ENCODE measurements at regions of chr2 and their contacts with region 1.

Region 1: DNA sequence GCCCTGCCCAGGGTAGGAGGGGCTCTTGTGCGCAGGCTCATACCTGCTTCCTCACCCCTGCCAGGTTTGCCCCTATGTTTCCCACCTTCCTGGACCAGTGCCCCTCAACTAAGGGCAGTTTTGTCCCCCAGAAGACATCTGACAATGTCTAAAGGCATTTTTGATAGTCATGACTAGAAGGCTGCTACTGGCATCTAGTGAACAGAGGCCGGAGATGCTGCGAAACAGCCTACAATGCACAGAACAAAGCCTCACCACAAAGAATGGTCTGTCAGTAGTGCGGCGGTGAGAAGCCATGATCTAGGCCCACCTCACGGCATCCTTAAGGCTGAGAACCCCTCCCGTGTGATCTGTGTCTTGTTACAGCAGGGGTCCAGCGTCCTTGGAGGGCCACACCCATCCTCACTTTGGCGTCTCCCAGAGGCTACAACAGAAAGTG is 96.0 kb downstream of the TMEM17 start:
- DNase-seq: peak in 1 of 2 experiments; percentile 28
- H3K4me3 ChIP-seq: no peak overlapping the region
- H3K4me3 Mint-ChIP-seq: no peak overlapping the region
- H3K27ac Mint-ChIP-seq: peak overlapping the region; percentile 84
- H3K4me1 ChIP-seq: peaks cover 50% of the 10 kb centered on the region
- H3K4me1 Mint-ChIP-seq: peaks cover 58% of the 10 kb centered on the region
- H3K27me3 ChIP-seq: no peaks in the 10 kb centered on the region
- H3K27me3 Mint-ChIP-seq: no peaks in the 10 kb centered on the region
- CTCF ChIP-seq: no peak

Region 2: GRCh38 chr2:60984720-60985119 is 1425.3 kb before region 1 on chr2:
- CTCF ChIA-PET with region 1: no interaction called
- POLR2A ChIA-PET with region 1: no interaction called
- intact Hi-C with region 1: no loop called
- DNase-seq: no peak
- H3K4me3 ChIP-seq: no peak overlapping the region
- H3K4me3 Mint-ChIP-seq: no peak overlapping the region
- H3K27ac Mint-ChIP-seq: no peak overlapping the region
- H3K4me1 ChIP-seq: no peaks in the 10 kb centered on the region
- H3K4me1 Mint-ChIP-seq: no peaks in the 10 kb centered on the region
- H3K27me3 ChIP-seq: no peaks in the 10 kb centered on the region
- H3K27me3 Mint-ChIP-seq: no peaks in the 10 kb centered on the region
- CTCF ChIP-seq: no peak

Region 3: DNA sequence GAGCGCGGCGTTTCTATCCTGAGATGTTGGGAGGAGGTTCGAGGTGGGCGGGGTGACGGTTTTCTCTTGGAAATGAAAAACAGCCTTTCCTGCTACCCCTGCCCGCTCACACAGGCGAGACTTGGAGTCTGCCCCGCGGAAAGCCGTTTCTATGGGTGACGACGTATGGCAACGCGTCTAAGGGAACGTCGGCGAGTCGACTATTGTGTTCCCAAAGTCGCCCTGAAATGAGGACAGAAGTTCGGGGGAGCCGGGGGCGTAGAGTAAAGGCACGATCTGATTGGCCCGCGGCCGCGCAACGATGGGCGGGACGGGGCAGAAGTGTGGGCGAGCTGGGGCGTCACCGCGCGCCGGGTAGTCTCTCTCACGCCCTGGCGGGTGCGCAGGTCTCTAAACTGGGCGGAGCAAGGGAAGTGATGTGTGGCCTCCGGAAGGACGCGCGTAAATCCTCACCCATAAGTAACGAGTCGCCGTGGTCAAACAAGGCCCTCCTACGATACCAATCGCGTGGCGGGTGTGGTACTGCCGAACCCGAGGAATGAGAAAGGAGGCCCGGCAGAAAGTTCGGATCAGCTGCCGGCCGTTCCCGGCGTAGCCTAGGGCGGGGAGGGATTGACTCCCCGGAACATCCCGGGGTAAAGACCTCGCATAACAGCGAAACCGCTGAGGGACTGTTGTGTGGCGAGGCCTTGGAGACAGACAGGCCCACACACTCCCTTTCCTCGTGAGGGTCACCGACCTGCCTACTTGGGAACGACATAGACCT is 645.8 kb before region 1 on chr2:
- CTCF ChIA-PET with region 1: no interaction called
- POLR2A ChIA-PET with region 1: no interaction called
- intact Hi-C with region 1: loop called (anchors 2 kb)
- DNase-seq: peak; percentile 98 to 99
- H3K4me3 ChIP-seq: peak overlapping the region; percentile 56
- H3K4me3 Mint-ChIP-seq: peak overlapping the region; percentile 72
- H3K27ac Mint-ChIP-seq: peak overlapping the region; percentile 97
- H3K4me1 ChIP-seq: no peaks in the 10 kb centered on the region
- H3K4me1 Mint-ChIP-seq: no peaks in the 10 kb centered on the region
- H3K27me3 ChIP-seq: no peaks in the 10 kb centered on the region
- H3K27me3 Mint-ChIP-seq: no peaks in the 10 kb centered on the region
- CTCF ChIP-seq: no peak

Region 4: GRCh38 chr2:61993444-61994024 is 416.5 kb before region 1 on chr2:
- CTCF ChIA-PET with region 1: interaction called, 30 read pairs
- POLR2A ChIA-PET with region 1: no interaction called
- intact Hi-C with region 1: loop called (anchors 1 kb)
- DNase-seq: peak in 1 of 2 experiments; percentile 49
- H3K4me3 ChIP-seq: no peak overlapping the region
- H3K4me3 Mint-ChIP-seq: no peak overlapping the region
- H3K27ac Mint-ChIP-seq: peak overlapping the region; percentile 31
- H3K4me1 ChIP-seq: peaks cover 6% of the 10 kb centered on the region
- H3K4me1 Mint-ChIP-seq: peaks cover 45% of the 10 kb centered on the region
- H3K27me3 ChIP-seq: no peaks in the 10 kb centered on the region
- H3K27me3 Mint-ChIP-seq: no peaks in the 10 kb centered on the region
- CTCF ChIP-seq: peak; percentile 75 to 77

Region 5: DNA sequence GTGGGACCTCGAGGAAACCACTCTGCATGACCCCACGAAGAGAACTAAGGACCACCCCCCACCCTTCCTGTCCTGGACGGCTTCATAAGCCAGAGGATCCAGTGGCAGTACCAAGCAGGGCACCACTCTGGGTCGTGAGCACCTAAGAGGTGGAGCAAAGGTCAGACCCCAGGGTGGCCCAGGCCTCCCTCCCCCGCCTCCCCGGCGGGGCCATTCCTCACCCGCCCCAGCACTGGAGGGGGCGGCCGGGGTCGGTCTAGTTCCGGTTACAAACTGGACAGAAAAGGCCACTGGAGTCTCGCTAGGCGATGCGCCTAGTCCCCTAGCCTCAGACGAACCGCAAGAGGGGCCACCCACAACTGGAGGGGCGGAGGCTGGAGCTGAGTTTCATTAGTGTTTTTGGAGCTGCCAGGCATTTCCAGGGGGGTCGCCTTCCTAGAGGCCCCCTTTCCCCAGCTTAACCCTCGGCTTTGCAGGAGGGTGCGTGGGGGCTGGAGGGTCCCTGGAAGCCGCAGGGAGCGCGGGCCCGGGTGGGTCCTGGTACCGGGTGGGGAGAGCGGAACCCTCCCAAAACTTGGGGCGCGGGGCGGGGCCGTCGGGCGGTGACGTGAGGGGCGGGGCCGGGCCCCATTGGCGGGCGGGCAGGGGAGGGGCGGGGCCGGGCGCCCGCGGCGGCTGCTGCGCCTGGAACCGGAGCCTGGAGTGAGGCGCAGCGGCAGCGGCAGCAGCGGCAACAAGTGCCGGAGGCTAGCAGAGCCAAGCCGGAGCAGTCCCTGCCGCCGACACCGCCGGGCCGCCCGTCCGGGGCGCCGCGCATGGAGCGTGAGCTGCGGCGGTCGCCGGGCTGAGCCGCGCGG is 214.4 kb before region 1 on chr2 and contains the start of gene B3GNT2:
- CTCF ChIA-PET with region 1: interaction called, 3 read pairs
- POLR2A ChIA-PET with region 1: interaction called, 5 read pairs
- intact Hi-C with region 1: loop called (anchors 2 kb)
- DNase-seq: peak; percentile 79 to 85
- H3K4me3 ChIP-seq: peak within 1 kb of the TSS; percentile 95
- H3K4me3 Mint-ChIP-seq: peak within 1 kb of the TSS; percentile 79
- H3K27ac Mint-ChIP-seq: peak within 1 kb of the TSS; percentile 36
- H3K4me1 ChIP-seq: peaks cover 23% of the 10 kb centered on the region
- H3K4me1 Mint-ChIP-seq: peaks cover 10% of the 10 kb centered on the region
- H3K27me3 ChIP-seq: no peaks in the 10 kb centered on the region
- H3K27me3 Mint-ChIP-seq: no peaks in the 10 kb centered on the region
- CTCF ChIP-seq: no peak
- total RNA-seq, gene B3GNT2: 47.4 and 50.5 TPM in 2 replicates

Region 6: DNA sequence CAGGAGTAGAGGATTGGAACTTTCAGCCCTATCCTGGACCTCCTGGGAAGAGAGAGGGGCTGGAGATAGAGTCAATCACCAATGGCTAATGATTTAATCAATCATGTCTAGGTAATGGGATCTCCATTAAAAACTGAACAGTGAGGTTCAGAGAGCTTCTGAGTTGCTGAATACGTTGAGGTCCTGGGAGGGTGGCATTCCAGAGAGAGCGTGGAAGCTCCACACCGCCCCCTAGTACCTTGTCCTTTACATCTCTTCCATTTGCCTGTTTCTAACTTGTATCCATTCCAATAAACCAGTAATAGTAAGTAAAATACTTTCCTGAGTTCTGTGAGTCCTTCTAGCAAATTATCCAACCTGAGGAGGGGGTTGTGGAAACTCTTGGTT is 112.4 kb before region 1 on chr2:
- CTCF ChIA-PET with region 1: interaction called, 5 read pairs
- POLR2A ChIA-PET with region 1: no interaction called
- intact Hi-C with region 1: loop called (anchors 2 kb)
- DNase-seq: peak in 1 of 2 experiments; percentile 34
- H3K4me3 ChIP-seq: no peak overlapping the region
- H3K4me3 Mint-ChIP-seq: no peak overlapping the region
- H3K27ac Mint-ChIP-seq: peak overlapping the region; percentile 47
- H3K4me1 ChIP-seq: peaks cover 34% of the 10 kb centered on the region
- H3K4me1 Mint-ChIP-seq: peaks cover 29% of the 10 kb centered on the region
- H3K27me3 ChIP-seq: no peaks in the 10 kb centered on the region
- H3K27me3 Mint-ChIP-seq: no peaks in the 10 kb centered on the region
- CTCF ChIP-seq: peak; percentile 18 to 28

Region 7: GRCh38 chr2:62362561-62362960 is 47.5 kb before region 1 on chr2:
- CTCF ChIA-PET with region 1: interaction called, 11 read pairs
- POLR2A ChIA-PET with region 1: no interaction called
- intact Hi-C with region 1: loop called (anchors 1 kb)
- DNase-seq: peak; percentile 73 to 85
- H3K4me3 ChIP-seq: no peak overlapping the region
- H3K4me3 Mint-ChIP-seq: no peak overlapping the region
- H3K27ac Mint-ChIP-seq: peak overlapping the region; percentile 54
- H3K4me1 ChIP-seq: peaks cover 19% of the 10 kb centered on the region
- H3K4me1 Mint-ChIP-seq: peaks cover 11% of the 10 kb centered on the region
- H3K27me3 ChIP-seq: no peaks in the 10 kb centered on the region
- H3K27me3 Mint-ChIP-seq: no peaks in the 10 kb centered on the region
- CTCF ChIP-seq: no peak

Region 8: DNA sequence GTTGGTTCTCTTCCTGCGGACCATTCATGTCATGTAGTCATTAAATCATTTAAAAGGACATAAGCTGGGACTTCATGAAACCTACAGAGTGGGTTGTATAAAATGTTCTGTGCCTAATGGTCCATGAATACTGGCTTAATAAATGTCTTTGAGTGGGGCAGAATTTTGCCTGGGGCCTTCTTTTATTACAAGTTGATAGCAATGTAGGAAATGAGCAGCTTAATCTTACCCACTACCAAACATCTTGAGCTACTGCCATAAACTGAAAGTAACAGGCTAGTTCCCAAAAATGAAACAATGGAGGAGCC is 35.0 kb before region 1 on chr2:
- CTCF ChIA-PET with region 1: no interaction called
- POLR2A ChIA-PET with region 1: no interaction called
- intact Hi-C with region 1: no loop called
- DNase-seq: no peak
- H3K4me3 ChIP-seq: no peak overlapping the region
- H3K4me3 Mint-ChIP-seq: no peak overlapping the region
- H3K27ac Mint-ChIP-seq: no peak overlapping the region
- H3K4me1 ChIP-seq: no peaks in the 10 kb centered on the region; the same call in 1 of the 2 replicates
- H3K4me1 Mint-ChIP-seq: peaks cover 2% of the 10 kb centered on the region
- H3K27me3 ChIP-seq: no peaks in the 10 kb centered on the region
- H3K27me3 Mint-ChIP-seq: no peaks in the 10 kb centered on the region
- CTCF ChIP-seq: no peak

Region 9: GRCh38 chr2:62456721-62457539 is 46.9 kb after region 1 on chr2:
- CTCF ChIA-PET with region 1: no interaction called
- POLR2A ChIA-PET with region 1: no interaction called
- intact Hi-C with region 1: no loop called
- DNase-seq: peak; percentile 82 to 95
- H3K4me3 ChIP-seq: peak overlapping the region; percentile 68
- H3K4me3 Mint-ChIP-seq: peak overlapping the region; percentile 75
- H3K27ac Mint-ChIP-seq: peak overlapping the region; percentile 66
- H3K4me1 ChIP-seq: peaks cover 38% of the 10 kb centered on the region
- H3K4me1 Mint-ChIP-seq: peaks cover 8% of the 10 kb centered on the region
- H3K27me3 ChIP-seq: no peaks in the 10 kb centered on the region
- H3K27me3 Mint-ChIP-seq: no peaks in the 10 kb centered on the region
- CTCF ChIP-seq: peak; percentile 92 to 98

Measured in Caco-2 (cell line).